Panc1 (cell line): ENCODE measurements at regions of chr3 and their contacts with region 1.

Region 1: GRCh38 chr3:188083016-188083415 is 70.9 kb upstream of the LPP start:
- DNase-seq: no peak
- ATAC-seq: no peak
- H3K4me3 ChIP-seq: no peak overlapping the region
- H3K27ac ChIP-seq: no peak overlapping the region
- H3K4me1 ChIP-seq: no peaks in the 10 kb centered on the region
- H3K27me3 ChIP-seq: no peaks in the 10 kb centered on the region
- CTCF ChIP-seq: no peak

Region 2: DNA sequence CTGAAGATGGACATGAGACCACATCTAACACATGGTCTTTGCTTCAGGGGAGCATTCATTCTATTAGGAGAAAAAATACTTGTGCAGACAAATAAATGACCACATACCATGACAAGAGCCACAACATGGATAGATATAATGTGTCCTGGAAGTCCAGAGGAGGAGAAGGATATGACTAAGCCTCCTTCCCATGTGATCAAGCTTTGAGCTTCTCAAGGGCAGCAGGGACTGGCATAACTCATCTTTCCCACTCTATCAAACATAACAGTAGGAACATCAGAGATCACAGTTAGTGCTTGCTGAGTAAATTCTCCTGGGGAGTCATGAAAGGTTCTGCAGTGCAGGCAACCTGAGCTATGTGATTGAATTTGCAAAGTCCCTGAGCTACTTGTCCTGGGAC is 15.1 kb before region 1 on chr3:
- CTCF ChIA-PET with region 1: no interaction called
- POLR2A ChIA-PET with region 1: no interaction called
- in situ Hi-C with region 1: no loop called
- intact Hi-C with region 1: loop called (anchors 1 kb)
- DNase-seq: no peak
- ATAC-seq: no peak
- H3K4me3 ChIP-seq: no peak overlapping the region
- H3K27ac ChIP-seq: no peak overlapping the region
- H3K4me1 ChIP-seq: no peaks in the 10 kb centered on the region
- H3K27me3 ChIP-seq: no peaks in the 10 kb centered on the region
- CTCF ChIP-seq: no peak

Region 3: DNA sequence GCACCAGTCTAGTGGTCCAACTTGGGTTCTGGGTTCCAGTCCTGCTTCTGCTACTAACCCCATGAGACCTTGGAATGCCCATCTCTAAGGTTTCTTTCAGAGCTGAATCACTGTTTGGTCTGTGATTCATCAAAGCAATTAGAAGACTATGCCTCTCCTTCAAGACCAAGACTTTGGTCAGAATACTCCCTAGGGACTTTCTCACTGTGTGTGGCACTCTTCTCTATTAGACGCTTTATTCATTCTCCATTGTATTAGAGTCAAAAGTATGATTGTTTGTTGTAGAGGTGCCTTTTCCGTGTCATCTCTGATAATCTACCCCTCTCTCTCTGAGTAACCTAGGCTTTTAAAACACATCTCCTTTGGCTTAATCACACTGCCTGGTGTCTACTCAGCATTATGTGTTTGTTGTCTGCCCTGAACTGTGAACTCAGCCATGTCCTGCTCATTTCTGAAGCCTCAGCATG is 161.4 kb after region 1 on chr3:
- CTCF ChIA-PET with region 1: no interaction called
- POLR2A ChIA-PET with region 1: no interaction called
- in situ Hi-C with region 1: no loop called
- intact Hi-C with region 1: no loop called
- DNase-seq: no peak
- ATAC-seq: peak; percentile 91
- H3K4me3 ChIP-seq: no peak overlapping the region
- H3K27ac ChIP-seq: peak overlapping the region; percentile 54
- H3K4me1 ChIP-seq: peaks cover 31% of the 10 kb centered on the region
- H3K27me3 ChIP-seq: no peaks in the 10 kb centered on the region
- CTCF ChIP-seq: no peak